CD8-positive, alpha-beta T cell (primary cell): ENCODE measurements at regions of chr16 and their contacts with region 1.

Region 1: DNA sequence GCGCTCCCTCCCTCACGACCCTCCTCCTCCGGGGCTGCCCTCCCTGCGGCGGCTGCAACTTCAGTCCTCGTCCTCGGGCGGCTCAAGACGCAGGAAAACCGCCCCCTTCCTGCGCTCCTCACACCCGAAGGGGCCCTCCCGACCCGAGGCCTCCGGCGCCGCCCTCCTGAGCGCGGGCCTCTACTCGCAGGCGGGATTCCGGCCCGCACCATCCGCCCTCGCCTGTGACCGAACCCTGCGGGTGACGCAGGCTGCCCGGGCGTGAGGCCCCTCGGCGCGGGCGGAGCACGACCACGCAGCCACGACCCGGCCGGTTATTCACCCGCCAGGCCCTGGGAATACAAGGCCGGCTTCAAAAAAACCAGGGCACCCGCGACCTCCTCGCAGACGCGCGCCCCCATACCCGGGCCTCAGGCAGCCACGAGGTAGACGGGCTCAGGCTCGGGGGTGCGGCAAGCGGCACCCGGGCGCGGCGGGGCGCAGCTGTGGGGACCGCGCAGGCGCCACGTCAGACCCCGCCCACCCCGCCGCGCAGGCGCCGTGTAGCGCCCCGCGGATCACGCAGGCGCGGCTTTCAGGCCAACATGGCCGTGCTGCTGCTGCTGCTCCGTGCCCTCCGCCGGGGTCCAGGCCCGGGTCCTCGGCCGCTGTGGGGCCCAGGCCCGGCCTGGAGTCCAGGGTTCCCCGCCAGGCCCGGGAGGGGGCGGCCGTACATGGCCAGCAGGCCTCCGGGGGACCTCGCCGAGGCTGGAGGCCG is at the start of gene SPG7:
- DNase-seq: peak; percentile 85 to 96 (median 88)
- ATAC-seq: peak; percentile 73
- H3K4me3 ChIP-seq: peak within 1 kb of the TSS; percentile 61 to 91
- H3K4me3 Mint-ChIP-seq: peak within 1 kb of the TSS; percentile 96
- H3K27ac ChIP-seq: peak within 1 kb of the TSS; percentile 77 to 86
- H3K27ac Mint-ChIP-seq: peak within 1 kb of the TSS; percentile 96
- H3K4me1 ChIP-seq: peaks cover 37% of the 10 kb centered on the region
- H3K4me1 Mint-ChIP-seq: peaks cover 32% of the 10 kb centered on the region
- H3K27me3 ChIP-seq: no peaks in the 10 kb centered on the region
- H3K27me3 Mint-ChIP-seq: no peaks in the 10 kb centered on the region
- CTCF ChIP-seq: no peak
- total RNA-seq, gene SPG7: 159 to 180 TPM

Region 2: GRCh38 chr16:89093602-89094251 is 414.3 kb before region 1 on chr16 and contains the start of gene ACSF3:
- CTCF ChIA-PET with region 1: no interaction called
- POLR2A ChIA-PET with region 1: no interaction called
- intact Hi-C with region 1: loop called in 1 of 2 experiments (anchors 10 kb)
- DNase-seq: peak; percentile 30 to 86 (median 65)
- ATAC-seq: peak; percentile 10
- H3K4me3 ChIP-seq: peak within 1 kb of the TSS; percentile 66 to 74
- H3K4me3 Mint-ChIP-seq: peak within 1 kb of the TSS; percentile 94
- H3K27ac ChIP-seq: peak within 1 kb of the TSS; percentile 58 to 66
- H3K27ac Mint-ChIP-seq: peak within 1 kb of the TSS; percentile 97
- H3K4me1 ChIP-seq: peaks cover 49% of the 10 kb centered on the region
- H3K4me1 Mint-ChIP-seq: peaks cover 51% of the 10 kb centered on the region
- H3K27me3 ChIP-seq: no peaks in the 10 kb centered on the region
- H3K27me3 Mint-ChIP-seq: peaks cover 13% of the 10 kb centered on the region
- CTCF ChIP-seq: no peak
- total RNA-seq, gene ACSF3: 33.5 to 37.0 TPM

Region 3: DNA sequence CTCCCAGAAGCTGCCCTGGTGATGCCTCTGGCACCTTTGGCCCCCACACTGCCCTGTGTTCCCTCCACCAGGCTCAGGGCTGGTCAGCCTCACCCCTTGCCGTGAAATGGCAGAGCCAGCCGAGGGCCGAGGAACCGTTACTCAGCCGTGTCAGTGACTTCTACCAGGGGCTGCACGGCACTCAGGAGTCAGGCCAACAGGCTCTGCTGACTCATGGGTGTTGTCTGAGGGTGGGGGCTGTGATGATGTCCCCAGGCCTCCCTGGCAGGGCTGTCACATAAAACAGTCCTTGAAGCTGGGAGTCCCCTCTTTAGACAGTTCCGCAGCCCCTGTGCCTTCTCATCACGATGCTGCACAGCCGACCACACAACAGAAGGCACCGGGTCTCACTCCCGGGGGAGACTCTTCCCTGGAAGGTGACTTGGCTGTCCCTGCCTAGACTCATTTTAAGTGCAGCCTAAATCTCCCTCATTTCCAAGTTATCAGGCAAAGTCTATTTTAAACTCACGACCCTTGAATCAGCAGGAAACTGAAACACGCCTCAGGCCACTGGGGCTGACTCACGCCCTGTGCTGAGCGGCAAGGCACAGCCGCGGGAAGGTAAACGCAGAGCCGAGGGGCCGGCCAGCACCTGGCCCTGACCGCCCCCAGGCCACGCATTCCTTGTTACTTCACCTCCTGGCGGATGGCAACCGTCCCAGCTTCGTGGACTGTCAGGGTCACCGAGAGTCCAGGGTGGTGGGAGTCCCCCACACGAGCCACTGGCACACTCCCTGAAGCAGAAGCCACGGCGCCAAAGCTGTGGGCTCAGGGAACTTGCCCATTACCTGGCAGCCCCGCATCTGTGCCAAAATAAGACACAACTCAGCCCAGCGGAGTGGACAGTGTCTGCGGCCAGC is 187.9 kb before region 1 on chr16:
- CTCF ChIA-PET with region 1: interaction called, 5 read pairs
- POLR2A ChIA-PET with region 1: interaction called, 15 read pairs
- intact Hi-C with region 1: loop called (anchors 2 to 5 kb)
- DNase-seq: peak in 6 of 9 experiments; percentile 17 to 52 (median 40)
- ATAC-seq: no peak
- H3K4me3 ChIP-seq: peak overlapping the region in 1 of 2 experiments; percentile 12
- H3K4me3 Mint-ChIP-seq: peak overlapping the region; percentile 57
- H3K27ac ChIP-seq: peak overlapping the region in 1 of 2 experiments; percentile 43
- H3K27ac Mint-ChIP-seq: peak overlapping the region; percentile 77
- H3K4me1 ChIP-seq: peaks cover 88% of the 10 kb centered on the region
- H3K4me1 Mint-ChIP-seq: peaks cover 92% of the 10 kb centered on the region
- H3K27me3 ChIP-seq: no peaks in the 10 kb centered on the region
- H3K27me3 Mint-ChIP-seq: no peaks in the 10 kb centered on the region
- CTCF ChIP-seq: no peak

Region 4: DNA sequence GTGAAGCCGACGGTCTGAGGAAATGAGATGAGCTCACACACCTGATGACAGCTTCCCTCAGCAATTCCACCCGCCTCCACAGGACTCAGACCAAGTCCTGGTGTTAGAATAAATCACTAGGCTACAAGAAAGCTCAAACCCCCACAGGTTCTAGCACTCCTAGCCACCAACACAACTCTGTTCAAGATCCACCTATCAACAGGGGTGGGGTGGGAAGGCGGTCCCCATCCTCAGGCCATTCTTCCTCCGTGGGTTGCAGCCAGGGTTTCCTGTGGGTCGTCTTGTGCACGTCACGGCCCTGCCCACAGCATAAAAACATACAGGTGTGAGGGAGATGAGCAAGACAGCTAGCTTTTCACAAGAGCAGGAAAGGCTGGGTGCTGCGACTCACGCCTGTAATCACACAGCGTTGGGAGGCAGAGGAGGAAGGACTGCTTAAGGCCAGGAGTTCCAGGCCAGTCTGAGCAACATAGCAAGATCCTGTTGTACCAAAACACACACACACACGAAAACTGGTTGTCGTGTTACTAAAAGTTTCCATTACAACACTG is 98.8 kb before region 1 on chr16:
- CTCF ChIA-PET with region 1: interaction called, 3 read pairs
- POLR2A ChIA-PET with region 1: interaction called, 3 read pairs
- intact Hi-C with region 1: loop called in 1 of 2 experiments (anchors 5 kb)
- DNase-seq: peak; percentile 56 to 94 (median 79)
- ATAC-seq: peak; percentile 84
- H3K4me3 ChIP-seq: no peak overlapping the region
- H3K4me3 Mint-ChIP-seq: peak overlapping the region; percentile 59
- H3K27ac ChIP-seq: peak overlapping the region; percentile 71 to 77
- H3K27ac Mint-ChIP-seq: peak overlapping the region; percentile 90
- H3K4me1 ChIP-seq: peaks cover 99% of the 10 kb centered on the region
- H3K4me1 Mint-ChIP-seq: peaks cover 88% of the 10 kb centered on the region
- H3K27me3 ChIP-seq: peaks cover 0 to 2% of the 10 kb centered on the region in 2 experiments
- H3K27me3 Mint-ChIP-seq: no peaks in the 10 kb centered on the region
- CTCF ChIP-seq: no peak

Region 5: GRCh38 chr16:89549007-89549700 is 41.1 kb after region 1 on chr16:
- CTCF ChIA-PET with region 1: interaction called, 4 read pairs
- POLR2A ChIA-PET with region 1: interaction called, 11 read pairs
- intact Hi-C with region 1: no loop called
- DNase-seq: peak in 6 of 9 experiments; percentile 32 to 76 (median 54)
- ATAC-seq: peak; percentile 83
- H3K4me3 ChIP-seq: peak overlapping the region in 1 of 2 experiments; percentile 13
- H3K4me3 Mint-ChIP-seq: peak overlapping the region; percentile 67
- H3K27ac ChIP-seq: peak overlapping the region; percentile 5 to 33
- H3K27ac Mint-ChIP-seq: peak overlapping the region; percentile 93
- H3K4me1 ChIP-seq: peaks cover 23% of the 10 kb centered on the region
- H3K4me1 Mint-ChIP-seq: peaks cover 23% of the 10 kb centered on the region
- H3K27me3 ChIP-seq: no peaks in the 10 kb centered on the region
- H3K27me3 Mint-ChIP-seq: no peaks in the 10 kb centered on the region
- CTCF ChIP-seq: no peak